Astrocyte of the cerebellum (primary cell): ENCODE measurements at regions of chr6 and their contacts with region 1.

Region 1: DNA sequence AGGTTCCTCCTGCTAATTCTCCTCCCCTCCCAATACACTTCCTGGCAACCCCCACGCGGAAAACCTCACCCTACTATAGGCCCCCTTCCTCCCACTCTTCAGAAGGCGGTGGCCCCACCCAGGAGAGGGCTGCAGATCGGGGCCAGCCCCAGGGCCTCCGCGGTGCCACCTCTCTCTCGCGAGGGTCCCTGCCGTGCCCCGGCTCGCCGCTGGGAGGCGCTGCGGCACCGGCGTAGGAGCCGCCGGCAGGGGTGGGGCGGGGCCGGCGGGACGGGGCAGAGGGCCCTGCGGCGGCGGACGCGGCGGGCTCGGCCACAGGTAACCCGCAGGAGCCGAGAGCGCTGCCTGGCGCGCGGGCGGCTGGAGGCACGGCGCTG is at the start of gene ANKRD6:
- DNase-seq: no peak
- H3K4me3 ChIP-seq: peak within 1 kb of the TSS; percentile 59
- CTCF ChIP-seq: peak; percentile 74

Region 2: GRCh38 chr6:89375427-89376267 is 57.2 kb before region 1 on chr6:
- in situ Hi-C with region 1: no loop called
- DNase-seq: no peak
- H3K4me3 ChIP-seq: no peak overlapping the region
- CTCF ChIP-seq: no peak

Region 3: DNA sequence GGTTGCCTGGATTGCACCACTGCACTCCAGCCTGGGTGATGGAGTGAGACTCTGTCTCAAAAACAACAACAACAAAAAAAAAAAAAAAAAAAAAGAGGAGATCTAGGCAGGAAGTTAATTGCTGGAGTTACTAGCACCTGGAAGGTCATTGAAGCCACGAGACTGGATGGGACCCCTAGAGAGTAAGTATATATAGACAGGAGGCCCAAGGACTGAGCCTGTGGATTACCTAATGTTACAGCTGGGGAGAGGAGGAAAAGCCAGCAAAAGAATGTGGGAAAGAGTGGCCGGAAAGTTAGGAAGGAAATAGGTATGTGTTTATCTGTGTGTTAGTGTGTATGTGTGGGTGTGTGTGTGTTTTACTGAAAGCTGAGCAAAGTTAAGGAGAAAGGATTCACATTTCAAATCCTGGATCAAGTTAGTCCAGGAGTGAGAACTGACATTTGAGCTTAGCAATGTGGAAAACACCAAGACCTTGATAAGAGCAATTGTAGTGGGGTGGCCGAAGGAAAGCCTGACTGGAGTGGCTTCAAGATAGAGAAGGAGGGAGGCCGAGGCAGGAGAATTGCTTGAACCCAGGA is 38.5 kb after region 1 on chr6:
- in situ Hi-C with region 1: no loop called
- DNase-seq: no peak
- H3K4me3 ChIP-seq: no peak overlapping the region
- CTCF ChIP-seq: no peak

Region 4: GRCh38 chr6:89763550-89763949 is 330.7 kb after region 1 on chr6:
- in situ Hi-C with region 1: loop called (anchors 25 kb)
- DNase-seq: no peak
- H3K4me3 ChIP-seq: no peak overlapping the region
- CTCF ChIP-seq: no peak

Region 5: DNA sequence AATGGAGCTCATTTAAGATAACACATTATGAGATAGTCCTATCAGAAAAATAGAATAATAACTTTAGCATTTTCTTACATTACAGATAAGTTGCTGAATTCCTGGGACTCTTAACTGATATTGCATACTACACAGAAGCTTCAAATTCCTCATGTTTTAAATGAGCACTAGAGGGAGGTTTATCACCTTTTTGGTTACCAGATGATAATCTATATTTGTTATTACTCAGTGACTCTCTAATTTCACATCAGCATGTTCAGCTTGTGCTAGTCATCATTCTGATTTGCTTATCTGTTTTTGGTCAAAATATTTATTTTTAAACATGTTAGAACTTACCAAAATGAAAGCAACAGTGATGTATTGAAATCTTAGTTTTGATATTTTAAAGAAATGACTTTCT is 440.9 kb after region 1 on chr6:
- in situ Hi-C with region 1: no loop called
- DNase-seq: no peak
- H3K4me3 ChIP-seq: no peak overlapping the region
- CTCF ChIP-seq: no peak